IMR-90 (cell line): ENCODE measurements at regions of chr1 and their contacts with region 1.

Region 1: GRCh38 chr1:121519042-121519755 is 334.4 kb downstream of the SRGAP2C start:
- DNase-seq: no peak
- ATAC-seq: peak; percentile 62; the same call in 1 of the 2 replicates
- H3K4me3 ChIP-seq: peak overlapping the region; percentile 18; the same call in 1 of the 2 replicates
- H3K27ac ChIP-seq: no peak overlapping the region
- H3K4me1 ChIP-seq: no peaks in the 10 kb centered on the region
- H3K27me3 ChIP-seq: peaks cover 26% of the 10 kb centered on the region
- CTCF ChIP-seq: no peak
- POLR2A ChIP-seq: no peak
- RAD21 ChIP-seq: no peak

Region 2: GRCh38 chr1:121418369-121419049 is 100.7 kb before region 1 on chr1:
- CTCF ChIA-PET with region 1: no interaction called
- POLR2A ChIA-PET with region 1: no interaction called
- dilution Hi-C with region 1: no loop called
- in situ Hi-C with region 1: no loop called
- intact Hi-C with region 1: no loop called
- DNase-seq: no peak
- ATAC-seq: no peak
- H3K4me3 ChIP-seq: no peak overlapping the region
- H3K27ac ChIP-seq: no peak overlapping the region
- H3K4me1 ChIP-seq: no peaks in the 10 kb centered on the region
- H3K27me3 ChIP-seq: no peaks in the 10 kb centered on the region; the same call in 1 of the 2 replicates
- CTCF ChIP-seq: no peak
- POLR2A ChIP-seq: no peak
- RAD21 ChIP-seq: no peak

Region 3: DNA sequence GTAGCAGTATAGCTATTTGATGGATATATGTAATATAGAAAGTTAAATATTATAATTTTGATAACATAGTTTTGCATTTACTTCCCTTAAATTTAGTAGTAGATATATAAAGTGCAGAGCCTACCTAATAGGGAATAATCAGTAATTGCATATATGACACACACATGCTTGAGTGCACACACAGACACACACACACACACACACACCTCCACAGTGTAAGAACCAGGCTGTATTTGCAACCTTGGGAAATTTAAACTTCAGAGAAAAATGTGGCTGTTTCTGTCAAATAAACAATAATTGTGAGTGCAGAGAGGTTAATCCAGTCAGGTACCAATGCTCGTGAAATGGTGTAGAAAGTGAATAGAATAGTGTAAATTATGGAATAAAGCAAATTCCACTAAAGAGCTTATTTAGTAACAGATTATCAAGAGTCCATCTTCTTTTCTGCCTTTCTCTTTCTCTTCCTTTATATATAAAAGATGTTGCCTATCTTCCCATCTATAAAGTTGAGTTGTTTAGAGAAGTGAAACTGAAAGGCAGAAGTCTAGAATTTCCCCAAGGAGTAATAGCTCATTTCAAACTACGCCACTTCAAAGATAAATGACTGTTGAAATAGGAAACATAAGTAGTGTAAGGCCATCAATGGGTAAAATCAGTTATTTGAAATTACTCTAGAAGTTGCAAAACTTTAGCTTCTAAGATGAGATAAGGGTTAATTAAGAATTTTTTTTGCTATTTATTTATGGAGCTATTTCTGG is 60.7 kb before region 1 on chr1:
- CTCF ChIA-PET with region 1: no interaction called
- POLR2A ChIA-PET with region 1: no interaction called
- dilution Hi-C with region 1: no loop called
- in situ Hi-C with region 1: no loop called
- intact Hi-C with region 1: loop called (anchors 5 kb)
- DNase-seq: no peak
- ATAC-seq: no peak
- H3K4me3 ChIP-seq: no peak overlapping the region
- H3K27ac ChIP-seq: no peak overlapping the region
- H3K4me1 ChIP-seq: no peaks in the 10 kb centered on the region
- H3K27me3 ChIP-seq: no peaks in the 10 kb centered on the region; the same call in 1 of the 2 replicates
- CTCF ChIP-seq: no peak
- POLR2A ChIP-seq: no peak
- RAD21 ChIP-seq: no peak

Region 4: DNA sequence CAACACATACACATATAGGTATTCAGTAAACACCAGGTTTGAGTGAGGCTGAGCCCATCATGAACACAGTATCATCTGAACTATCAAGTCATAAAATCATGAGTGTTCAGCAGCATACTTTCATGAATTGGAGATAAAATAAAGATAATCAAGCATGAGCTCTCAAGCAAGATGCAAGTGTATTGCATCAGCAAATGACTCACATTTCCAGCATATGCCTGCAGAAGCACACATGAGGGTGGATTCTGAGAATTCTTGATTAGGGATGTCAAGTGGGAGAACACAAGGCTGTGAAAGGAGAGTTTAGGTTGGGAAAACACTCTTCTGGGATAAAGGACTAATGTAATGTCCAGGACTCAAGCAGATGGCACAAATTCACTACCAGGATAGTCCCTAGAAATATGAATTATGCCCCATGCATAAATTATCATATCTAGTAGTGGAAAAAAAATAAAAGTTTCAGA is 35.2 kb before region 1 on chr1:
- CTCF ChIA-PET with region 1: no interaction called
- POLR2A ChIA-PET with region 1: no interaction called
- dilution Hi-C with region 1: no loop called
- in situ Hi-C with region 1: no loop called
- intact Hi-C with region 1: no loop called
- DNase-seq: peak; percentile 88
- ATAC-seq: peak; percentile 94
- H3K4me3 ChIP-seq: no peak overlapping the region
- H3K27ac ChIP-seq: no peak overlapping the region
- H3K4me1 ChIP-seq: no peaks in the 10 kb centered on the region
- H3K27me3 ChIP-seq: peaks cover 2% of the 10 kb centered on the region
- CTCF ChIP-seq: no peak
- POLR2A ChIP-seq: no peak
- RAD21 ChIP-seq: no peak

Region 5: DNA sequence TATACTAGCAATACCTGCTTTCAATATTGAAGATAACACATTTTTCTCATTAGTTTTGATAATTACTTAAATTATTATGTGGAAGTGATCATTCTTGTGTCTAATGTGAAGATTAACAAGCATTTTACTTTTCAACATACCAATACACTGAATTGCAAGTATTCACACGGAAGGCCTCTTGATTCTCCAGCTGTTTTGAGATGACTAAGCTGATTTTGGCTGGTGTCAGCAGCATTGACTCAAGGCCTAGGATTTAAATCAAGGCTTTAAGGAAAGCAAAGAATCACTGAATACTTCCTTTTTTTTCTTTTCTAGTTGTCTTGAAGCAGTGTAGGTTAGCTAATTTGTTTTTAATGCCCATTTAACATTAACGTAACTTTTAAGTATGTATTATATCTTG is 39.3 kb after region 1 on chr1:
- CTCF ChIA-PET with region 1: interaction called, 3 read pairs
- POLR2A ChIA-PET with region 1: no interaction called
- dilution Hi-C with region 1: no loop called
- in situ Hi-C with region 1: no loop called
- intact Hi-C with region 1: loop called (anchors 5 kb)
- DNase-seq: peak; percentile 90
- ATAC-seq: peak; percentile 92
- H3K4me3 ChIP-seq: no peak overlapping the region
- H3K27ac ChIP-seq: no peak overlapping the region
- H3K4me1 ChIP-seq: no peaks in the 10 kb centered on the region
- H3K27me3 ChIP-seq: no peaks in the 10 kb centered on the region; the same call in none of the 2 replicates
- CTCF ChIP-seq: no peak
- POLR2A ChIP-seq: no peak
- RAD21 ChIP-seq: no peak

Region 6: GRCh38 chr1:121569428-121569827 is 50.2 kb after region 1 on chr1:
- CTCF ChIA-PET with region 1: no interaction called
- POLR2A ChIA-PET with region 1: no interaction called
- dilution Hi-C with region 1: no loop called
- in situ Hi-C with region 1: no loop called
- intact Hi-C with region 1: no loop called
- DNase-seq: no peak
- ATAC-seq: no peak
- H3K4me3 ChIP-seq: no peak overlapping the region
- H3K27ac ChIP-seq: no peak overlapping the region
- H3K4me1 ChIP-seq: no peaks in the 10 kb centered on the region
- H3K27me3 ChIP-seq: no peaks in the 10 kb centered on the region
- CTCF ChIP-seq: no peak
- POLR2A ChIP-seq: no peak
- RAD21 ChIP-seq: no peak

Region 7: DNA sequence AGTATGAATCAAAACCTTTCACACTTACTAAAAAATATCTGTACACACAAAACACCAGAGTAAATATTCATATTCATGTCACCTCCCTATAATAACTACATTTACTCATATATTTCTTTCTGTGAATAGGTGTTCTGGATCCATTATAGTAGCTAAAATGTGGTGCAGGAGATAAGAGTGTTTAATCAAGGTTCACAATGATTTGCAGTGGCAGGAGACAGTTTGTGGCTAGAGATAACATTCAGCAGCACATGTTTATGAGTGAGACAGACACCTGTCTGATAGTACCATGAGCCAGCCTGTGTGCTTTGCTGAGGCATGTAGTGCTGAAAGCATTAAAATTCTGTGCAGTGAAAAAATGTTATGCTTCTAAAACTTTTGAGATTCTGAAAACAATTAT is 75.9 kb after region 1 on chr1:
- CTCF ChIA-PET with region 1: no interaction called
- POLR2A ChIA-PET with region 1: no interaction called
- dilution Hi-C with region 1: no loop called
- in situ Hi-C with region 1: no loop called
- intact Hi-C with region 1: loop called (anchors 5 kb)
- DNase-seq: no peak
- ATAC-seq: no peak
- H3K4me3 ChIP-seq: no peak overlapping the region
- H3K27ac ChIP-seq: no peak overlapping the region
- H3K4me1 ChIP-seq: no peaks in the 10 kb centered on the region
- H3K27me3 ChIP-seq: no peaks in the 10 kb centered on the region
- CTCF ChIP-seq: no peak
- POLR2A ChIP-seq: no peak
- RAD21 ChIP-seq: no peak